AG04450 (cell line): ENCODE measurements at regions of chr22 and their contacts with region 1.

Region 1: GRCh38 chr22:36445158-36445668 is 36.2 kb downstream of the TXN2 start:
- DNase-seq: peak; percentile 94
- H3K4me3 ChIP-seq: no peak overlapping the region
- H3K27ac ChIP-seq: peak overlapping the region; percentile 92
- H3K27me3 ChIP-seq: no peaks in the 10 kb centered on the region
- CTCF ChIP-seq: no peak

Region 2: DNA sequence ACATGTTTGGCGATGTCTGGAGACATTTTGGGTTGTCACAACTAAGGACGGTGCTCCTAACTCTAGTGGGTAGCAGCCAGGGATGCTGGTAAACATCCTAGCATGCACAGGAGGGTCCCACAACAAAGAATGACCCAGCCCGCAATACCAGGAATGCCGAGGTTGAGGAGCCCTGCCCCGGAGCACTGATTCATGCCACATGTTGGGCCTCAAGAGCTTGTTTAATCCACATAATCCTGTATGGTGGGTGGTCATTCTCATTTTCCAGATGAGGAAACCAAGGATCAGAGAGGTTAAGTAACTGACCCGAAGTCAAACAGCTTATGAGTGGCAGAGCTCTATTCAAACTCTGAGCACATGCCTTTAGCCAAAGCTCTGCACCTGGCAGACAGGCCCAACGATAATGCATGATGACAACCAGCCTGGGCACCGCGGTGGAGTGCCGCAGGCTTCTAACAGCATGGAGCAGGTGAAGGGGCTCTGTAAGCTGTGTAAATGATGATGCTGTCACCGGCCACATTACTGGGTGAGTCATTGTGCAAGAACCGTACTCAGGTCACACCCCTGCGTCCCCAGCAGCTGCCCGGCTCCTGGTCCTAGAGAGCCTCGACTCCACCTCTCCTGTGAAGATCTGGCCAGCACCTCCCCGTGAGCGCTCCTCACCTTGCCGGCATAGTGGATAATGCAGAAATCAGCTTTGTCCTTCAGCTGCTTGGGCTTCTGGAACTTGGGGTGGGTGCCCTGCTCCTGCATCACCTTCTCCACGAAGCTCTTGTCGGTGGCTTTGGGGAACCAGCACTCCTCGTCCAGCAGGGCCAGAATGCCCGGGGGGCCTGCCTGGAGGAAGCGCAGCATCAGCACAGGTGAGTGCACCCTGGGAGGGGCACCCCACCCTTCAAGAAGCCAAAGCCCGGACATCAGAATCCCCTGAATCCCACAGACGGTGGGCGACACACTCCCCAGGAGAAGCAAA is 133.5 kb before region 1 on chr22:
- CTCF ChIA-PET with region 1: no interaction called
- POLR2A ChIA-PET with region 1: interaction called, 13 read pairs
- DNase-seq: no peak
- H3K4me3 ChIP-seq: no peak overlapping the region
- H3K27ac ChIP-seq: peak overlapping the region; percentile 31
- H3K27me3 ChIP-seq: no peaks in the 10 kb centered on the region
- CTCF ChIP-seq: no peak

Region 3: DNA sequence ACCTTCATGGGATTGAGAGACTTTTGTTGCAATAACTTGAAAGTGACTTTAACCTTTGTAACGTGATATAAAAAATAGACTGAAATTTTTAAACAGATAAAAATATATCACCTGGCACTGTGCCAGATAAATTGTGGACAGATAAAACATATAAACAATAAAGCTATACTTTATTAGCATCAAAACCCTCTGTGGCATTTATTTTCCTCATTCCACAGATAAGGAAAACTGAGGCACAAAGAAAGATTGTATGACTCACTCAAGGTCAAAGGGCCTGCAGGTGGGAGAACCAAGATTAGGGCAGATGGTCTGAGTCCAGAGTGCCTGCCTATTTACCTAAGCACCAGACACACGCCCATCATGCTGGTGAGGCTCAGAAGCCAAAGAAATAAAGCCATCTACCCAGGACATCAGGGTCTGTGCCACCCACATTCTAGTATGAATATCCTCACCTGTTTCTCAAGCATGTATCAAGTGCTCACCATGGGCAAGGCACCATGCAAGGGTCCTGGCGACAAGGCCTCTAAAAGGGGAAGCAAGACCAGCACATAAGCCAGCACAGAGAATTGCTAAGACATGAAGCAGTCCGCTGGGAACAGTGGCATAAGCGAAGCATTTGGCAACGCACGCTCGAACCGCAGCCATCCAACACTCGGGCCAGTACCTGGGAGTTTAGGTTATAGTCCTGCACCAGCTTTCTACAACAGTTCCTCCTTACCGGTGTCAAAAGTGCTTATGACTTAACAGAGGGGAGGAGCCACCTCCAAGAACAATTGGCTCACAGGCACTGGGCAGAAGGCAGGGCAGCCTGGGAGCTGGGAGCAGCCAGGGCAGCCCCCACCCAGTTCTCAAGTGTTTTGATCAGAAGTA is 75.1 kb before region 1 on chr22:
- CTCF ChIA-PET with region 1: no interaction called
- POLR2A ChIA-PET with region 1: interaction called, 15 read pairs
- DNase-seq: no peak
- H3K4me3 ChIP-seq: peak overlapping the region; percentile 35
- H3K27ac ChIP-seq: peak overlapping the region; percentile 57
- H3K27me3 ChIP-seq: no peaks in the 10 kb centered on the region
- CTCF ChIP-seq: no peak

Region 4: GRCh38 chr22:36461669-36462649 is 16.7 kb after region 1 on chr22:
- CTCF ChIA-PET with region 1: no interaction called
- POLR2A ChIA-PET with region 1: interaction called, 13 read pairs
- DNase-seq: peak; percentile 93
- H3K4me3 ChIP-seq: no peak overlapping the region
- H3K27ac ChIP-seq: peak overlapping the region; percentile 89
- H3K27me3 ChIP-seq: no peaks in the 10 kb centered on the region
- CTCF ChIP-seq: no peak

Region 5: GRCh38 chr22:36546092-36546804 is 101.0 kb after region 1 on chr22:
- CTCF ChIA-PET with region 1: no interaction called
- POLR2A ChIA-PET with region 1: no interaction called
- DNase-seq: no peak
- H3K4me3 ChIP-seq: no peak overlapping the region
- H3K27ac ChIP-seq: no peak overlapping the region
- H3K27me3 ChIP-seq: peaks cover 10% of the 10 kb centered on the region
- CTCF ChIP-seq: peak; percentile 58